ENCODE measurements at regions of chr7 and their contacts with region 1.

Region 1: GRCh38 chr7:85023045-85023712 is 163.7 kb downstream of the SEMA3D start:
- DNase-seq: peak in 1 of 2 donors; percentile 46
- ATAC-seq: peak in 1 of 8 donors; percentile 43
- H3K4me3 ChIP-seq: no peak overlapping the region
- H3K27ac ChIP-seq: no peak overlapping the region
- H3K4me1 ChIP-seq: peaks cover 0 to 9% (median 0%) of the 10 kb centered on the region in 9 donors
- H3K27me3 ChIP-seq: no peaks in the 10 kb centered on the region
- CTCF ChIP-seq: peak; percentile 55 to 87 (median 69)

Region 2: GRCh38 chr7:83936056-83936708 is 1087.0 kb before region 1 on chr7:
- intact Hi-C with region 1: loop called in 9 of 10 experiments (anchors 1 to 10 kb)
- DNase-seq: peak in 1 of 2 donors; percentile 39
- ATAC-seq: peak in 4 of 8 donors; percentile 59 to 68 (median 64)
- H3K4me3 ChIP-seq: no peak overlapping the region
- H3K27ac ChIP-seq: peak overlapping the region in 1 of 10 donors; percentile 10
- H3K4me1 ChIP-seq: peaks cover 0 to 8% (median 3%) of the 10 kb centered on the region in 9 donors
- H3K27me3 ChIP-seq: no peaks in the 10 kb centered on the region
- CTCF ChIP-seq: peak; percentile 65 to 92 (median 79)

Region 3: DNA sequence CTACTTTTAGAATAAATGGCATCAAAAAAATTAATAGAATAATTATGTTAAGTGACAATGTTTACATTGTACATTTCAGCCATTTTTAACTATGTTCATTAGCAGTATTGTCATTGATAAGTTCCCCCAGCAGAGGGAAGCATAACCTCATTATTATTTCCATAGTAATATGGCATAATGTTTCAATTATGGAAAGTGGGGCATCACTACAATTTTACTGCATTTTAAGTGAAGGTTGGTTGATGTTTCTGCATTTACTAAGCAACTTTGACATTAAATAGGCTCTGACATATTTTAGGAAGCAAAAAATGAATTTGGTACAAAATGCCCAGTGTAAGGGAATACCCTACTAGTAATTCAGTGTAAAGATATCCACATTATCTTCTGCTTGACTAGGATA is 1046.9 kb before region 1 on chr7:
- intact Hi-C with region 1: loop called (anchors 1 to 5 kb)
- DNase-seq: peak in 1 of 2 donors; percentile 4
- ATAC-seq: no peak
- H3K4me3 ChIP-seq: no peak overlapping the region
- H3K27ac ChIP-seq: no peak overlapping the region
- H3K4me1 ChIP-seq: no peaks in the 10 kb centered on the region
- H3K27me3 ChIP-seq: no peaks in the 10 kb centered on the region
- CTCF ChIP-seq: peak; percentile 25 to 83 (median 69)

Region 4: GRCh38 chr7:84614821-84615505 is 408.2 kb before region 1 on chr7:
- intact Hi-C with region 1: loop called in 1 of 10 experiments (anchors 10 kb)
- DNase-seq: no peak
- ATAC-seq: no peak
- H3K4me3 ChIP-seq: no peak overlapping the region
- H3K27ac ChIP-seq: no peak overlapping the region
- H3K4me1 ChIP-seq: no peaks in the 10 kb centered on the region
- H3K27me3 ChIP-seq: no peaks in the 10 kb centered on the region
- CTCF ChIP-seq: peak in 2 of 9 donors; percentile 18 to 30

Region 5: DNA sequence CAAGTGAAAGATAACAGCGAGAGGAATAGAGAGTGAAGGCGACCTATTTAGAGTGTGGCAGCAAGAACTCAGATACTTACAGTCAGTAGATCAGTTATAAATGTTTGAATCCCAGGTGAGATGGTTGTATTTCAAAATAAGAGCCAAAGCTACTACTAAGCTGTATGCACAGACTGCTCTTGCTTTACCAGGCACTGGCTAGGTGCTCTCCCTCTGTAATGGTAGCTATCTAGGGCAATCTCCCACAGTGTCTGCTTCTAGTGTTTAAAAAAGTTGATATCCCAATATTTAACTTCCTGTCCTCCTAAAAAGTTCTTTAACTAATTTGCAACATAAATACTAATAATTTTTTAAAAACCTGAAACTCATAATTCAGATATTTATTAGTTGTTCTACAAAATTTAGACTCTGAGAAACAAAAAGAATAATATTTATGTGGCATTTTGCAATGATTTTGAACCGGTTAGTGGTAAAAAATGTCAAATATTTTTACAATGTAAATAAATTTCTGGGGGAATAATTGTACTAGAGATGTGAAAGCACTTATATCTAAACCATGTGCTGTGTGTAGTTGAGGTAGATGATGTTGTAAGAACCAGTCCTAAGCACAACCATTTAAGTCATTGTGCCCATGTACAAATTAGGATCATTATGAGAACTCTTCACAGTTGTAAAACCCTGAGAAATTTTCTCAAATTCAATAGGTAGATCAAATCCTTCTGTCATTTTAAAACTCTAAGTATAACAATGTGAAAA is 513.0 kb after region 1 on chr7:
- intact Hi-C with region 1: no loop called
- DNase-seq: no peak
- ATAC-seq: no peak
- H3K4me3 ChIP-seq: no peak overlapping the region
- H3K27ac ChIP-seq: no peak overlapping the region
- H3K4me1 ChIP-seq: no peaks in the 10 kb centered on the region
- H3K27me3 ChIP-seq: no peaks in the 10 kb centered on the region
- CTCF ChIP-seq: no peak

Region 6: GRCh38 chr7:85554236-85555178 is 531.3 kb after region 1 on chr7:
- intact Hi-C with region 1: loop called in 1 of 10 experiments (anchors 10 kb)
- DNase-seq: peak in 1 of 2 donors; percentile 5
- ATAC-seq: peak in 1 of 8 donors; percentile 34
- H3K4me3 ChIP-seq: no peak overlapping the region
- H3K27ac ChIP-seq: no peak overlapping the region
- H3K4me1 ChIP-seq: peaks cover 0 to 5% (median 0%) of the 10 kb centered on the region in 9 donors
- H3K27me3 ChIP-seq: no peaks in the 10 kb centered on the region
- CTCF ChIP-seq: peak; percentile 25 to 78 (median 66)

Measured in heart right ventricle (tissue), 16 donors.